ENCODE measurements at regions of chr9 and their contacts with region 1.

Region 1: DNA sequence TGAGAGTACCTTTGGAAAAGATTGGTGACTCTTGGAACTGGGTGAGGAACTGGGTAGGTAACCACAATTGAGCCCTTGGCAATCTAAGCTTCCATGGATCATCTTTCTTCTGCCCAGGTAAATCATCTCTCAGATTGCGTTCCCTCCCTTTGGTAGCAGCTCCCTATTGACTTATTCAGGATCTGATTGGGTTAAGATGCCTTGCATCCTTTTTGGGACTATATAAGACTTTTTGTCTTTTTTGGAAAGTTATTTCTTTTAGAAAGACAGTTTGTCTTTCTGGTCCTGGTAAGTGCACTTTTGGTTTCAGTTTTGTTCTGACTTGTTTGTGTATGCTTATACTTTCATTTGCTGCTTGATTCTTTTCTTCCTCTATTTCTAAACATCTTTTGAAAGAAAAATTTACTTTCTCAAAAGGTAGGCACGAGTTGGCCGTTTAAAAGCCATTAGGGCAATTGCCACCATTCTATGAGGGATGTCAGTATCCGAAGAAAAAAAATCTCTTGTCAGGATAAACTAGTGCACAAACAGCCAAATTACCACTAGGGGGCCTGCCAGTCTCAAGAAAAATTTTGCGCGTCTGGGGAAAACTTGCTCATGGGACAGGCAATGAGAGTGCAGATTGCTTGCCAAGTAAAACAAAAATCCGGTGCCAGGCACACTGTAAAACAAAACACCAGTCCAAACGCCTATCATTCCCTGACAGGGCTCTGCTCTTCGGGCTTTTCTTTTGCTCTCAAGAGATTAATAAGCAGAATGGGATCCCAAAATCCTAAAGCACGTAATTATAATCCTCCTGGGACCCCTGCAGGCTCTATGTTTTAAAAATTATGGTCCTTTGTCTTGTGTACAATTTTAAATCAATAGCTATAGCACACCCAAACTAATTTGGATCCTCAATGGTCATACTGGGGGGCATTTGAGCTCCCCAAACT is 12.8 kb downstream of the OR1J1 start:
- DNase-seq: peak; percentile 37 to 66
- ATAC-seq: peak; percentile 58 to 90 (median 62)
- H3K4me3 ChIP-seq: peak overlapping the region; percentile 59
- H3K27ac ChIP-seq: no peak overlapping the region
- H3K4me1 ChIP-seq: peaks cover 6% of the 10 kb centered on the region
- H3K27me3 ChIP-seq: no peaks in the 10 kb centered on the region
- CTCF ChIP-seq: peak; percentile 75

Region 2: DNA sequence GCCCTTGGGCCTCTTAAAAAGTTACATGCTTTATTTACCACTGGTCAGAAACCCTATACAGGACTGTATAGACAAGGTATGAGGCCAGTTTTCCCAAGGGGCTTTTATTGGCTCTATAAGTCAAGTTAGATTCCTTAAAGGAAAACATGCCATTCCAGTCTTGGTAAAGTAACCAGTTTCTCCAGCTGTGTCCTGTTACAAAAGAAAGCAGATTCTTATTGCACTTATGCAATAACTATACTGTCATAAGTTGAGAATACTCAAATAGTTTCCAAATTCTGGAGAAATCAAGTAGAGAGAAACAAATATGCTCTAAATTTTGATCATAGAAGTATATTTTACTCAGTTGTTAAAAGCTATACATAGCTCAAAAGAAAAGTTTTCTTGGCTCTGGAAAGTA is 46.9 kb before region 1 on chr9:
- intact Hi-C with region 1: no loop called
- DNase-seq: no peak
- ATAC-seq: no peak
- H3K4me3 ChIP-seq: no peak overlapping the region
- H3K27ac ChIP-seq: no peak overlapping the region
- H3K4me1 ChIP-seq: no peaks in the 10 kb centered on the region
- H3K27me3 ChIP-seq: peaks cover 0 to 3% (median 0%) of the 10 kb centered on the region in 3 donors
- CTCF ChIP-seq: no peak

Region 3: GRCh38 chr9:122810306-122810946 is 345.5 kb after region 1 on chr9:
- intact Hi-C with region 1: loop called (anchors 1 to 2 kb)
- DNase-seq: peak; percentile 63 to 81
- ATAC-seq: peak; percentile 84 to 98 (median 90)
- H3K4me3 ChIP-seq: no peak overlapping the region
- H3K27ac ChIP-seq: no peak overlapping the region
- H3K4me1 ChIP-seq: no peaks in the 10 kb centered on the region
- H3K27me3 ChIP-seq: no peaks in the 10 kb centered on the region
- CTCF ChIP-seq: peak; percentile 80

Region 4: GRCh38 chr9:122991370-122991830 is 526.5 kb after region 1 on chr9:
- intact Hi-C with region 1: loop called (anchors 5 to 10 kb)
- DNase-seq: peak in 1 of 2 donors; percentile 14
- ATAC-seq: peak; percentile 57 to 93 (median 86)
- H3K4me3 ChIP-seq: no peak overlapping the region
- H3K27ac ChIP-seq: no peak overlapping the region
- H3K4me1 ChIP-seq: no peaks in the 10 kb centered on the region
- H3K27me3 ChIP-seq: no peaks in the 10 kb centered on the region
- CTCF ChIP-seq: peak; percentile 71